ENCODE measurements at regions of chr7 and their contacts with region 1.

Region 1: DNA sequence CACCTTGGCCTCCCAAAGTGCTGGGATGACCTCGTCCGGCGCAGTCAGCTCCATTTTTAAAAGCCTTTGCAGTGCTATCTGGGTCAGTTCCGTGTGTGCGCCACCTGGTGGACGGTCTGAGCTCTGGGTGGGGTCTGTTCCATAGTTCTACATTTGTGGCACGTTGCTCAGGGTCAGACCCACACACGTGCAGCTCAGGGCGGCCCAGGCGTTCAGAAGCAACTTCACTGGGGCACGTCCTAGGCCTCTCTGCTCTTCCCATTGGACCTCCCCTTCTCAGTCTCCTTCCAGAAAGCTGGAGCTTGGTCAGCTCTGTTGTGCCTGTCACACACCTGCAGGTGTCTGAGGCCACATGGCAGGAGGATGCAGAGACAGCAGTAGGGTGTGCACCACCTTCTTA is 137.9 kb downstream of the DNAJB6 start:
- DNase-seq: no peak
- H3K4me3 ChIP-seq: no peak overlapping the region
- H3K4me3 Mint-ChIP-seq: peak overlapping the region in 2 of 8 donors; percentile 13 to 34
- H3K27ac ChIP-seq: no peak overlapping the region
- H3K27ac Mint-ChIP-seq: peak overlapping the region in 5 of 7 donors; percentile 19 to 80 (median 43)
- H3K4me1 ChIP-seq: peaks cover 55% of the 10 kb centered on the region
- H3K4me1 Mint-ChIP-seq: peaks cover 33 to 82% (median 52%) of the 10 kb centered on the region in 4 donors
- H3K27me3 ChIP-seq: no peaks in the 10 kb centered on the region
- H3K27me3 Mint-ChIP-seq: no peaks in the 10 kb centered on the region

Region 2: DNA sequence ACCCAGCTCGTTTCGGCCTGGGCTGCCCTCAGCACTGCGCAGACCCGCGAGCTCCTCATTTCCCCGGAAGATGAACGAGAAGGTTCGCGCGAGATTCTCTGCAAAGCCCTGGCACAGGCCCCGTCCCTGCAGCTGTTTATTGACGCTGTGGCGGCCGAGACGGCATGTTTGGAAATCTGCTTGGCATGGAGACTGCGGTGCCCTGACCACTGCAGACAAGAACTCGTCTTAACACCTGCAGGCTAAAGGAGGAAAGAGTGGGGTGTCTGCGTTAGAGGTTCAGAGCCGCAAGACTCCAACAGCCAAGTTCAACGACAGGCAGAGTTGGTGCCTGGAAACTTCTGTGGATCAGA is 12.3 kb before region 1 on chr7:
- CTCF ChIA-PET with region 1: interaction called, 3 read pairs
- POLR2A ChIA-PET with region 1: interaction called, 10 read pairs
- intact Hi-C with region 1: no loop called
- DNase-seq: no peak
- H3K4me3 ChIP-seq: no peak overlapping the region
- H3K4me3 Mint-ChIP-seq: peak overlapping the region in 2 of 8 donors; percentile 7 to 49
- H3K27ac ChIP-seq: no peak overlapping the region
- H3K27ac Mint-ChIP-seq: peak overlapping the region in 2 of 7 donors; percentile 48 to 49
- H3K4me1 ChIP-seq: no peaks in the 10 kb centered on the region
- H3K4me1 Mint-ChIP-seq: peaks cover 8 to 14% (median 10%) of the 10 kb centered on the region in 4 donors
- H3K27me3 ChIP-seq: no peaks in the 10 kb centered on the region
- H3K27me3 Mint-ChIP-seq: no peaks in the 10 kb centered on the region

Region 3: GRCh38 chr7:157490457-157490912 is 15.8 kb after region 1 on chr7:
- CTCF ChIA-PET with region 1: interaction called, 6 read pairs
- POLR2A ChIA-PET with region 1: interaction called, 57 read pairs
- intact Hi-C with region 1: loop called (anchors 2 kb)
- DNase-seq: peak; percentile 79 to 86 (median 81)
- H3K4me3 ChIP-seq: no peak overlapping the region
- H3K4me3 Mint-ChIP-seq: peak overlapping the region in 7 of 8 donors; percentile 4 to 73 (median 66)
- H3K27ac ChIP-seq: peak overlapping the region; percentile 6
- H3K27ac Mint-ChIP-seq: peak overlapping the region; percentile 55 to 93 (median 87)
- H3K4me1 ChIP-seq: peaks cover 37% of the 10 kb centered on the region
- H3K4me1 Mint-ChIP-seq: peaks cover 26 to 50% (median 37%) of the 10 kb centered on the region in 4 donors
- H3K27me3 ChIP-seq: no peaks in the 10 kb centered on the region
- H3K27me3 Mint-ChIP-seq: peaks cover 0 to 2% of the 10 kb centered on the region in 2 donors

Region 4: GRCh38 chr7:157568770-157569584 is 94.3 kb after region 1 on chr7:
- CTCF ChIA-PET with region 1: no interaction called
- POLR2A ChIA-PET with region 1: interaction called, 9 read pairs
- intact Hi-C with region 1: loop called (anchors 5 kb)
- DNase-seq: peak; percentile 62 to 80 (median 72)
- H3K4me3 ChIP-seq: peak overlapping the region in 1 of 2 donors; percentile 61
- H3K4me3 Mint-ChIP-seq: peak overlapping the region; percentile 91 to 98 (median 96)
- H3K27ac ChIP-seq: peak overlapping the region; percentile 40
- H3K27ac Mint-ChIP-seq: peak overlapping the region; percentile 79 to 98 (median 97)
- H3K4me1 ChIP-seq: peaks cover 17% of the 10 kb centered on the region
- H3K4me1 Mint-ChIP-seq: peaks cover 12 to 52% (median 29%) of the 10 kb centered on the region in 4 donors
- H3K27me3 ChIP-seq: no peaks in the 10 kb centered on the region
- H3K27me3 Mint-ChIP-seq: no peaks in the 10 kb centered on the region

Region 5: DNA sequence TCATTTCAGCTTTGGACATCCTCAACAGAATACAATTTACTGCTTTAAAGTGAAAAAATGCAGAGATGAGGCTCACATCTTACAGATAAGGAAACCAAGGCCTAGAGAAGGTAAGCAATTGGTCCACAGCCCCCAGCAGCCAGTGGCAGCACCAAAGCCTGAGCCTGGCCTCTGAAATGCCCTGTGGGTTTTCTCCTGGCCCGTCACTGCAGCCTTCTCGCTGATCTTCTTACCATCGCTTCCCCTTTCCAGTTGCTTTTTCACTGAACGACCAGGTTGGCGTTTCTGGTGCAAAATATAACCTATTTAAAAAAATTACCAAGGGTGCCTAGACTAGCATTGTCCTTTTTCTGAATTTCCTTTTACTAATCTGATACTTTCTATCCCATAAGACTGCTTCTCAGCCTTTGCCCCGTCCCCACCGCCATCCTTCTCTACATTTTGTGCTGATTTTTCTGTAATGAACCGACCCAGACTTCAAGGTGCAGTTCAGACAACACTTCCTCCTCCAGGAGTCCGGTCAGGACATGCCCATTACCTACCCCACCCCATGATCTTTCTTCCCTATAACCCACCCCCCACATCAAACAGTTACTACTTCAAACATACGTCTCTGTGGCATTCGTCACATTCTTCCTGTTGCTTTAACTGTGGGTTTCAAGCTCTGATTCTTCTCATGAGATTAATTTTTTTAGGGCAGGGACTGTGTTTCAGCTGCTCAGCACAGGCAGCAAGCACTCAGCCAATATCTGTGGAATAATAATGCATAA is 151.5 kb after region 1 on chr7:
- CTCF ChIA-PET with region 1: no interaction called
- POLR2A ChIA-PET with region 1: interaction called, 7 read pairs
- intact Hi-C with region 1: loop called (anchors 5 kb)
- DNase-seq: peak; percentile 53 to 75 (median 69)
- H3K4me3 ChIP-seq: peak overlapping the region in 1 of 2 donors; percentile 13
- H3K4me3 Mint-ChIP-seq: peak overlapping the region; percentile 60 to 84 (median 81)
- H3K27ac ChIP-seq: no peak overlapping the region
- H3K27ac Mint-ChIP-seq: peak overlapping the region; percentile 7 to 96 (median 91)
- H3K4me1 ChIP-seq: peaks cover 57% of the 10 kb centered on the region
- H3K4me1 Mint-ChIP-seq: peaks cover 33 to 78% (median 61%) of the 10 kb centered on the region in 4 donors
- H3K27me3 ChIP-seq: no peaks in the 10 kb centered on the region
- H3K27me3 Mint-ChIP-seq: peaks cover 2 to 3% of the 10 kb centered on the region in 2 donors

Measured in CD4-positive, alpha-beta memory T cell (primary cell).